ENCODE measurements at regions of chr10 and their contacts with region 1.

Region 1: GRCh38 chr10:97731346-97732051 is 5.4 kb upstream of the ZFYVE27 start:
- DNase-seq: no peak
- ATAC-seq: peak; percentile 78
- H3K4me3 ChIP-seq: no peak overlapping the region
- H3K27ac ChIP-seq: no peak overlapping the region
- H3K4me1 ChIP-seq: peaks cover 2% of the 10 kb centered on the region; the same call in 1 of the 2 replicates
- H3K27me3 ChIP-seq: no peaks in the 10 kb centered on the region
- CTCF ChIP-seq: peak; percentile 78 to 84 (median 80)
- EP300 ChIP-seq: no peak
- POLR2A ChIP-seq: no peak
- RAD21 ChIP-seq: peak; percentile 91

Region 2: GRCh38 chr10:97572214-97572989 is 159.1 kb before region 1 on chr10 and contains the start of gene ANKRD2:
- CTCF ChIA-PET with region 1: interaction called, 6 read pairs
- POLR2A ChIA-PET with region 1: interaction called, 3 read pairs
- RAD21 ChIA-PET with region 1: no interaction called
- SMC1A ChIA-PET with region 1: interaction called, 4 read pairs
- in situ Hi-C with region 1: no loop called
- intact Hi-C with region 1: loop called (anchors 2 kb)
- DNase-seq: no peak
- ATAC-seq: peak; percentile 97
- H3K4me3 ChIP-seq: no peak within 1 kb of the TSS
- H3K27ac ChIP-seq: no peak within 1 kb of the TSS
- H3K4me1 ChIP-seq: no peaks in the 10 kb centered on the region
- H3K27me3 ChIP-seq: no peaks in the 10 kb centered on the region
- CTCF ChIP-seq: peak; percentile 89 to 95 (median 94)
- EP300 ChIP-seq: no peak
- POLR2A ChIP-seq: no peak
- RAD21 ChIP-seq: peak; percentile 73
- polyA plus RNA-seq, gene ANKRD2: not detected

Region 3: DNA sequence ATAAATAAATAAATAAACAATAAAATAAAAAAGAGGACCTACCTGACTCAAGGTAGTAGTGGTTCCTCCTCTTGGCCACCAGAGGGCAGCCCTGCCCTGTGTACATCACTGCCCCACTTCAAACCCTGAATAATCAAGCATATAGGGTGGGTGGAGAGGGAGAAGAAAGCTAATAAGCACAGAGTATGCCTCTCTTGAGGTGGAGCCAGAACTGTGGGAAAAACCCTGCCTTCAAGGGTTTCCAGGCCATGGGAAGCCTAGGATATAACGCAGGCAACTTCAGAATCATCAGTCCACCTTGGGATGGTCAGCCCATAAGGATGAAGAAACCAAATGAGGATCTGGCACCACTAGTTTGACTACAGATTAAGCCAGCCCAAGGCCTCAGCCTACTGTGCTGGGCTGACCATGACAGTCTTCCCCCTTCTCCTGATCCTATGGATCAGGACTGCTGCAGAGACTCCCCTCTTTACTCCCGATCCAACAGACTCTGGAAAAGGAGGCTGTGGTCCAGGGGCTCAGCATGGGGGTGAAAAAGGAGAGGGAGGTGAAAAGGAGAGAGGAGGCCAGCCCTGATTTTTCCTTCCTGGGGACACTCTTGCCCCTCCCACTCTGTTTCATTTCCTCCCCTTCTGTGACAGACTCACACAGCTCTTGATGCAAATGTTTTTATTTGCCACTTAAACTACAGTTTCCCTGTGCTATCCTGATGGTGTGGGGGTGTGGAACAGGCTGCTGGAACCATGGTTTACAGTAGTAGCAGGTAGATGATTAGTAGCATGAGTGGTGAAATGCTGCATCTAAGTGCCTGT is 54.5 kb before region 1 on chr10:
- CTCF ChIA-PET with region 1: interaction called, 124 read pairs
- POLR2A ChIA-PET with region 1: no interaction called
- RAD21 ChIA-PET with region 1: interaction called, 7 read pairs
- SMC1A ChIA-PET with region 1: interaction called, 17 read pairs
- in situ Hi-C with region 1: loop called (anchors 5 kb)
- intact Hi-C with region 1: loop called (anchors 1 kb)
- DNase-seq: no peak
- ATAC-seq: peak; percentile 95
- H3K4me3 ChIP-seq: no peak overlapping the region
- H3K27ac ChIP-seq: 0 out of 2 replicates have a peak overlapping the region, but pooled peaks have one; percentile 6
- H3K4me1 ChIP-seq: peaks cover 12% of the 10 kb centered on the region
- H3K27me3 ChIP-seq: no peaks in the 10 kb centered on the region
- CTCF ChIP-seq: peak; percentile 76 to 80 (median 78)
- EP300 ChIP-seq: no peak
- POLR2A ChIP-seq: peak; percentile 20; the same call in 1 of the 2 replicates
- RAD21 ChIP-seq: peak; percentile 81

Region 4: DNA sequence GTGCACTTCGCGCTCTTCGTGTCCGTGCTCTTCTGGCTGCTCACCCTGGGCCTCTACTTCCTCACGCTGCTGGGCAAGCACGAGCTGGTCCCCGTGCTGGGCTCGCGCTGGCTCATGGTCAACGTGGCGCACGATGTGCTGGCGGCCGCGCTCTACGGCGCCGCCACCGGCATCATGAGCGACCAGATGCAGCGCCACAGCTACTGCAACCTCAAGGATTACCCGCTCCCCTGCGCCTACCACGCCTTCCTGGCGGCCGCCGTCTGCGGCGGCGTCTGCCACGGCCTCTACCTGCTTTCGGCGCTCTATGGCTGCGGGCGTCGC is 17.5 kb before region 1 on chr10:
- CTCF ChIA-PET with region 1: interaction called, 416 read pairs
- POLR2A ChIA-PET with region 1: no interaction called
- RAD21 ChIA-PET with region 1: interaction called, 6 read pairs
- SMC1A ChIA-PET with region 1: interaction called, 24 read pairs
- in situ Hi-C with region 1: no loop called
- intact Hi-C with region 1: loop called (anchors 1 kb)
- DNase-seq: no peak
- ATAC-seq: peak; percentile 87
- H3K4me3 ChIP-seq: peak overlapping the region; percentile 74
- H3K27ac ChIP-seq: no peak overlapping the region
- H3K4me1 ChIP-seq: peaks cover 3% of the 10 kb centered on the region; the same call in 1 of the 2 replicates
- H3K27me3 ChIP-seq: peaks cover 0 to 2% of the 10 kb centered on the region in 2 experiments; a peak in 1 of 4 replicates
- CTCF ChIP-seq: peak; percentile 13 to 42 (median 28); a peak in 3 of 6 replicates
- EP300 ChIP-seq: no peak
- POLR2A ChIP-seq: peak; percentile 87
- RAD21 ChIP-seq: no peak